CD4-positive, alpha-beta T cell (primary cell): ENCODE measurements at regions of chr21 and their contacts with region 1.

Region 1: GRCh38 chr21:14591882-14592281 is 45.8 kb upstream of the SAMSN1 start:
- DNase-seq: peak in 4 of 14 experiments; percentile 6 to 74 (median 66)
- ATAC-seq: peak; percentile 46
- H3K4me3 ChIP-seq: no peak overlapping the region
- H3K4me3 Mint-ChIP-seq: no peak overlapping the region
- H3K27ac ChIP-seq: no peak overlapping the region
- H3K27ac Mint-ChIP-seq: peak overlapping the region; percentile 54
- H3K4me1 ChIP-seq: peaks cover 10% of the 10 kb centered on the region
- H3K4me1 Mint-ChIP-seq: peaks cover 21% of the 10 kb centered on the region
- H3K27me3 ChIP-seq: no peaks in the 10 kb centered on the region
- H3K27me3 Mint-ChIP-seq: no peaks in the 10 kb centered on the region
- CTCF ChIP-seq: no peak

Region 2: GRCh38 chr21:14602382-14602958 is 10.6 kb after region 1 on chr21:
- CTCF ChIA-PET with region 1: interaction called, 3 read pairs
- POLR2A ChIA-PET with region 1: interaction called, 10 read pairs
- intact Hi-C with region 1: no loop called
- DNase-seq: peak in 2 of 14 experiments; percentile 32 to 39
- ATAC-seq: no peak
- H3K4me3 ChIP-seq: peak overlapping the region; percentile 37
- H3K4me3 Mint-ChIP-seq: peak overlapping the region; percentile 51
- H3K27ac ChIP-seq: no peak overlapping the region
- H3K27ac Mint-ChIP-seq: no peak overlapping the region
- H3K4me1 ChIP-seq: no peaks in the 10 kb centered on the region
- H3K4me1 Mint-ChIP-seq: peaks cover 25% of the 10 kb centered on the region
- H3K27me3 ChIP-seq: no peaks in the 10 kb centered on the region
- H3K27me3 Mint-ChIP-seq: no peaks in the 10 kb centered on the region
- CTCF ChIP-seq: no peak

Region 3: DNA sequence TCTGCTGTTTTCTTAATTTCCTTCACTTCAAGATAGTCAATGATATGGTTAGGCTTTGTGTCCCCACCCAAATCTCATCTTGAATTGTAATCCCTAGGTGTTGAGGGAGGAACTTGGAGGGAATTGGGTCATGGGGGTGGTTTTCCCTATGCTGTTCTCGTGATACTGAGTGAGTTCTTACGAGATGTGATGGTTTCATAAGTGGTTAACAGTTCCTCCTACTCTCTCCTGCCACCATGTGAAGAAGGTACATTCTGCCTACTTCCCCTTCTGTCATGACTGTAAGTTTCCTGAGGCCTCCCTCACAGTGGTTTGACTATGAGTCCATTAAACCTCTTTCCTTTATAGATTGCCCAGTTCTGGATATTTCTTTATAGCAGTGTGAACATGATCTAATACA is 28.3 kb after region 1 on chr21:
- CTCF ChIA-PET with region 1: no interaction called
- POLR2A ChIA-PET with region 1: no interaction called
- intact Hi-C with region 1: no loop called
- DNase-seq: peak in 1 of 14 experiments; percentile 11
- ATAC-seq: no peak
- H3K4me3 ChIP-seq: no peak overlapping the region
- H3K4me3 Mint-ChIP-seq: no peak overlapping the region
- H3K27ac ChIP-seq: no peak overlapping the region
- H3K27ac Mint-ChIP-seq: no peak overlapping the region
- H3K4me1 ChIP-seq: no peaks in the 10 kb centered on the region
- H3K4me1 Mint-ChIP-seq: no peaks in the 10 kb centered on the region
- H3K27me3 ChIP-seq: no peaks in the 10 kb centered on the region
- H3K27me3 Mint-ChIP-seq: no peaks in the 10 kb centered on the region
- CTCF ChIP-seq: no peak